Spleen (tissue), 13 donors: ENCODE measurements at regions of chr15 and their contacts with region 1.

Region 1: GRCh38 chr15:70722266-70723121 is 40.9 kb downstream of the UACA start:
- DNase-seq: no peak
- H3K4me3 ChIP-seq: no peak overlapping the region
- H3K27ac ChIP-seq: peak overlapping the region in 1 of 8 donors; percentile 7
- H3K4me1 ChIP-seq: peaks cover 0 to 32% (median 3%) of the 10 kb centered on the region in 6 donors
- H3K27me3 ChIP-seq: no peaks in the 10 kb centered on the region
- CTCF ChIP-seq: peak in 10 of 11 experiments; percentile 4 to 76 (median 64)
- POLR2A ChIP-seq: no peak

Region 2: DNA sequence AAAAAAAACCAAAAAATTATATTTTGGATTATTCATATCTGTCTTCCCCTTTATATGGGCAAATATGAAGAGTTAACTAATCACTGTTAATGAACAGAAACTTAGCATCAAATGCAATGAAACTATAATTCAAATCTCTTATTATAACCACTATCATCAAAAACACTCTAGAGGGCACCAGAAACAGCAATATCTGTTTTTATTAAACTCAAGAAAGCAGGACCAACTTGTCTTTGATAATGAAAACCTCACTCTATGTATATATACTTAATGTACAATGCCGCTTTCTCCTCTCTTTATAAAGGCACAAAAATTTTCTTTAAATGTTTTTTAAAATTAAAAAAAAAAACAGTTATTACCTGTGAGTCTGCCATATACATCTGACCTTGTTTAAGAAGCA is 51.8 kb before region 1 on chr15:
- intact Hi-C with region 1: loop called (anchors 10 kb)
- DNase-seq: no peak
- H3K4me3 ChIP-seq: no peak overlapping the region
- H3K27ac ChIP-seq: no peak overlapping the region
- H3K4me1 ChIP-seq: peaks cover 4 to 45% (median 27%) of the 10 kb centered on the region in 6 donors
- H3K27me3 ChIP-seq: no peaks in the 10 kb centered on the region
- CTCF ChIP-seq: no peak
- POLR2A ChIP-seq: no peak

Region 3: DNA sequence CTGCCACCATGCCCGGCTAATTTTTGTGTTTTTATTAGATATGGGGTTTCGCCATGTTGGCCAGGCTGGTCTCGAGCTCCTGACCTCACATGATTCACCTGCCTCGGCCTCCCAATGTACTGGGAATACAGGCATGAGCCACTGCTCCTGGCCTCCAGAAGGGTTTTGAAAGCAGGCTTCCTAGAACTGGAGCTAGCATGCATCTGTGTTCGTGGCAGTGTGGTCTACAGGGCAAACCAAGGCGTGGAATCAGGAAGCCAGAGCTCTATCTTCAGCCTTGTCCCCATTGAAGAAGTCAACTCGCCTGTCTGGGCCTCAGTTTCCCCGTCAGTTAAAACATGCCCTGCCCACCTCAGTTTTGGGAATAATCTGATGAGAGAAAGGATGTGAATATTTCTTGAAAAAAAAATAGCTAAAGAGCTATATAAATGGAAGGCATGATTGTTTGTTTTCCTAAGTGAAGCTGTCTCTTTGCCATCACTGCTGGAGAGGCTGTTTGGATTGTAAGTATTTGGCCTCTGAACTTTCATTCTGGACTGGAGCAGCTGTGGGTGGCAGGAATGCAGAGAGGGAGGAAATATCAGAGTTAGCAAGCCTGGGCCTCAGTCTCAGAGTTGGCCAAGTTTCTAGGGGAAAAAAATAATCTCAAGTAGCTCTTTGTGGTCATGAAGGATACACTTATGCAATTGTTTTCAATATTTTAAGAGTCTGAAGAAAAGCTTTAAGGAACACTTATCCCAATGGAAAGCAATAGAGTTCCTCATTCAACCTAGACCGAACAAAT is 77.4 kb after region 1 on chr15:
- intact Hi-C with region 1: no loop called
- DNase-seq: no peak
- H3K4me3 ChIP-seq: no peak overlapping the region
- H3K27ac ChIP-seq: peak overlapping the region in 4 of 8 donors; percentile 28 to 35 (median 30)
- H3K4me1 ChIP-seq: peaks cover 0 to 14% (median 0%) of the 10 kb centered on the region in 6 donors
- H3K27me3 ChIP-seq: peaks cover 0 to 3% (median 0%) of the 10 kb centered on the region in 7 donors
- CTCF ChIP-seq: no peak
- POLR2A ChIP-seq: no peak

Region 4: GRCh38 chr15:70955151-70955550 is 232.7 kb after region 1 on chr15:
- intact Hi-C with region 1: no loop called
- DNase-seq: no peak
- H3K4me3 ChIP-seq: no peak overlapping the region
- H3K27ac ChIP-seq: no peak overlapping the region
- H3K4me1 ChIP-seq: no peaks in the 10 kb centered on the region
- H3K27me3 ChIP-seq: peaks cover 0 to 14% (median 0%) of the 10 kb centered on the region in 7 donors
- CTCF ChIP-seq: no peak
- POLR2A ChIP-seq: no peak